ENCODE measurements at regions of chr3 and their contacts with region 1.

Region 1: DNA sequence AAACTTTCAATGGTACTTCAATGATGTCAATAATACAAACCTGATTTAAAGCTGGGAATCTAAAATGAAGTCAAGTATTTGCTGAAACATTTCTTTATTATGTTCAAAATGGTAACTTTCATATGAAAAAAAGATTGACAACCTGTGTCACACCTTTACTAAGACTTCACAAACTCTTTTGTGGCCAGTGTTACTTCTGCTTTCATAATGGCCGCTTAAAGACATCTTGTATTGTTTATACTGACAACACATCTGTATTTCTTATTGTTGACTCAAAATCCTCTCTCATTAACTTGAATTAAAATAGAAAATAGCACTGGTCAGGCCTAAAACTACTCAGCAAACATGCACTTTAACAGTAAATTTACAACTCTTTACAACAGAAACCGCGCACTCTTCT is 312.3 kb upstream of the CNTN6 start:
- DNase-seq: no peak
- ATAC-seq: no peak
- H3K4me3 ChIP-seq: no peak overlapping the region
- H3K27ac ChIP-seq: no peak overlapping the region
- H3K4me1 ChIP-seq: no peaks in the 10 kb centered on the region
- H3K27me3 ChIP-seq: no peaks in the 10 kb centered on the region
- CTCF ChIP-seq: no peak

Region 2: GRCh38 chr3:159974-160373 is 620.5 kb before region 1 on chr3:
- intact Hi-C with region 1: no loop called
- DNase-seq: no peak
- ATAC-seq: no peak
- H3K4me3 ChIP-seq: no peak overlapping the region
- H3K27ac ChIP-seq: no peak overlapping the region
- H3K4me1 ChIP-seq: no peaks in the 10 kb centered on the region
- H3K27me3 ChIP-seq: peaks cover 0 to 3% (median 0%) of the 10 kb centered on the region in 7 donors
- CTCF ChIP-seq: no peak

Region 3: GRCh38 chr3:2061360-2061759 is 1280.9 kb after region 1 on chr3:
- intact Hi-C with region 1: loop called in 1 of 10 experiments (anchors 10 kb)
- DNase-seq: no peak
- ATAC-seq: no peak
- H3K4me3 ChIP-seq: no peak overlapping the region
- H3K27ac ChIP-seq: no peak overlapping the region
- H3K4me1 ChIP-seq: no peaks in the 10 kb centered on the region
- H3K27me3 ChIP-seq: peaks cover 0 to 3% (median 0%) of the 10 kb centered on the region in 7 donors
- CTCF ChIP-seq: no peak

Measured in heart right ventricle (tissue), 16 donors.